Dorsolateral prefrontal cortex (tissue), 120 donors: ENCODE measurements at regions of chr2 and their contacts with region 1.

Region 1: DNA sequence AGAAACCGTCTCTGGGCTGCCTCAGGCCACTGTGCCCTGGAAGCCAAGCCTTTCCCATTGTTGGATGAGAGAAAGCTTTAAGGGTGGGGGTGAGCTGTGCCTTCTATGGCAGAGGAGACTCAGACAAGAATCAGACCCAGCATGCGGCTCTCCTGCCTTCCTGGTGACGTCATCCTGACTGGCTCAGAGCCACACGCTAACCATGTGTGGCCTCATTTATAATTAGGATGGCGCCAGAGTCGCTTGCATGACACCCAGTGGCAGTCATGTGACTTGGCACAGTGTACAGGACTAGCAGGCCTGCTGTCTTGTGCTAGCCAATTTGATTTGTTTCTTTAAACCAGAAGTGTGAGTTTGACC is 99.2 kb downstream of the SH3BP4 start:
- DNase-seq: peak; percentile 77 to 97 (median 90)
- H3K4me3 ChIP-seq: no peak overlapping the region
- H3K27ac ChIP-seq: peak overlapping the region in 53 of 59 donors; percentile 1 to 92 (median 75)
- H3K27me3 ChIP-seq: no peaks in the 10 kb centered on the region
- CTCF ChIP-seq: peak in 37 of 56 donors; percentile 6 to 58 (median 32)

Region 2: DNA sequence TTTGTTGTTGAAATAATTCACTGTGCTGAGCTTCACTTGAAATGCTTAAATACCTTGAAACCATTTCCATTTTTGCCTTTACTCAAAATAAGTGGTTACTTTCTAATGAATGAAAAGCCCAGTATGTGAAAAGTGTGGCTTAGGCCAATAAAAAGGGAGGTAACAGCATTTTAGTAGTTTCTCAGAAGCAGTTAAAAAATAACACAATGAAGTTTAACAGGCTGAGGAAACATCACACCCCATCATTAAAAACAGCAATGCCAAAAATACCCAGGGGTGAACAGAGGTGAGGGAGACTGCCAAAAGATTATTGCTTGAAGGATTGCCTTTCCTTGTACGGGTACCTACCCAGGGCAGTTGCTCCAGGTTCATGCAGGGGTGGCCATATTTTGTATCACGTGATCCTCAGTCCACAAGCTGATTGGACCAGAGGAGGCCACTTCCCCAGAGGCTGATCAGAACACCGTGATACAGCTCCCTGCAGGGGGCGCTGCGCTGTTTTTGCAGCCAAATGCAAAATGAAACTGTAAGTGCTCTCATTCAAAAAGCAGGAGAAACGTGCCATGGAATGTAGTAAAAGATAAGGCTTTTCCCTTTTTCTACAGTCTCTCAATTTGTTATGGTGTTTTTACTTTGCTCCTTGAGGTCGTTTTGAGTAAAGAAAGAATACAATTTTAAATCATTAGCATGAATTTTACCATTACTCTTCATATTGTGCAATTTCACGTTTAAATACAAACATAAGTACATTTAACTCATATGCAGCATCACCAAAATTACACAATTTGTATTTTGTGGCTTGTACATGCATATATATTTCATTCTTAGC is 169.3 kb before region 1 on chr2:
- intact Hi-C with region 1: loop called (anchors 2 to 10 kb)
- DNase-seq: peak; percentile 23 to 93 (median 86)
- H3K4me3 ChIP-seq: peak overlapping the region in 53 of 59 donors; percentile 6 to 62 (median 38)
- H3K27ac ChIP-seq: peak overlapping the region in 37 of 59 donors; percentile 1 to 74 (median 51)
- H3K27me3 ChIP-seq: peaks cover 0 to 6% (median 0%) of the 10 kb centered on the region in 45 donors
- CTCF ChIP-seq: peak; percentile 61 to 98 (median 88)

Region 3: GRCh38 chr2:235005603-235006259 is 45.2 kb before region 1 on chr2:
- intact Hi-C with region 1: loop called in 1 of 2 experiments (anchors 10 kb)
- DNase-seq: peak in 9 of 10 donors; percentile 49 to 78 (median 72)
- H3K4me3 ChIP-seq: peak overlapping the region in 3 of 59 donors; percentile 3 to 20 (median 4)
- H3K27ac ChIP-seq: peak overlapping the region in 23 of 59 donors; percentile 1 to 58 (median 36)
- H3K27me3 ChIP-seq: no peaks in the 10 kb centered on the region
- CTCF ChIP-seq: peak in 45 of 56 donors; percentile 11 to 62 (median 37)